ENCODE measurements at regions of chr11 and their contacts with region 1.

Region 1: DNA sequence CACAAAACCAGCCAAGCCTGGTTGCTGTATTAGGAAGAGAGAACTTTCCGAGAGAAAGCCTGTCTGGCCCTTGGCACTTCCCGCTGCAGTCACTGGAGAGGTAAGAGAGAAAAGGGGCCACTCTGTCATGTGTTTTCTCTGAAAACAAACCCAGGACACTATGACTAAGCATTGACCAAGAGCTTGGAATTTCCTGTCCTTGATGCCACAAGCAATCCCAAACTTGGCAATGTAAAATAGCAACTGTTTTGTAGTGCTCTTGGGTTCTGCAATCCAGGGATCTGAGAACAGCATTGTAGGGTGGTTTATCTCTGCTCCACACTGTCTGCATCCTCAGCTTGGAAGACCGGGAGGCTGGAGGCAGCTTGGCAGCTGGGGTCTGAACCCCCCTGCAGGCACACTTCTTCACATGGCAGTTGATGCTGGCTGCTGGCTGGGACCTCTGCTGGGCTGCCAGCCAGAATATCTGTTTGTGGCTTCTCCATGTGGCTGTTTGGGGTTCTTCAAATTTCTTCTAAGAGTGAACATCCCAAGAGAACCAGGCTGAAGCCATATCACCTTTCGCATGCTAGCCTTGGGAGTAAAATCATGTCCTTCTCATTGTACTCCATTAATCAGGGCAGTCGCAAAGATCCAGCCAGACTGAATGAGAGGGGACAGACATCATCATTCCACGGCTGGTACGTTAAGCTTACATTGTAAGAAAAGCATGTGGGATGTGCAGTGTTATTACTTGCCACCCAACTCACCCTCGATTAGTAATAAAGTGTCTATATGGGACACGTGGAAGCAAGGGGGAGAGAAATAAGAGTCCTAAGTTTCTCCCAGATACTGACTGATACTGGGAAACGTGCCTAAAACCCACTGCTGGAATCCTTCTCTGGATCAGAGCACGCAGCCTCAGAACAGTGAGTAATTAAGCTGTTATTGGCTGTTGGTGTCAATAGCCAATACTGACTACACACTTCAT is 537.4 kb upstream of the B3GAT1 start:
- DNase-seq: peak; percentile 27 to 88
- H3K4me3 ChIP-seq: peak overlapping the region in 1 of 2 donors; percentile 10
- H3K27ac ChIP-seq: peak overlapping the region; percentile 77 to 82
- H3K4me1 ChIP-seq: peaks cover 14 to 35% of the 10 kb centered on the region in 2 donors
- H3K27me3 ChIP-seq: no peaks in the 10 kb centered on the region
- CTCF ChIP-seq: no peak

Region 2: GRCh38 chr11:134488913-134489312 is 460.5 kb before region 1 on chr11:
- intact Hi-C with region 1: no loop called
- DNase-seq: peak in 1 of 2 donors; percentile 38
- H3K4me3 ChIP-seq: no peak overlapping the region
- H3K27ac ChIP-seq: no peak overlapping the region
- H3K4me1 ChIP-seq: no peaks in the 10 kb centered on the region
- H3K27me3 ChIP-seq: no peaks in the 10 kb centered on the region
- CTCF ChIP-seq: no peak

Region 3: DNA sequence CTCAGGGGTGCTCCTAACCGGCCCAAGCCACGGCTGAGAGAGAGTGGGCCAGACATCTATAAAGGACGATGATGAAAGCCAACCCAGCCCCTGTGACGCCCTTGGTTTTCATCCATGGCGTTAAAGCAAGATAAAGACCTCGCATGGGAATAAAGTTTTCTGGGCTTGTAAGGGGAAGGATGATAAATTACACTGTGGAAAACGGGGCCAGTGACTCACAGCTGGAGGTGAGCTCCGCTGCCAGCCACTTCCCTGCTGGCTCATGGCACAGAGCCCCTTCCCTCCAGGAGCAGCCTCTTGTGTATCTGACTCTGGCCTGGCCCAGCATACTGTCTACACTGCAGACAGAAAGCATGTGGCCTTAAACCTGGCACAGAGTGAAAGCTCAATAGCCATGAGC is 34.2 kb before region 1 on chr11:
- intact Hi-C with region 1: loop called (anchors 1 kb)
- DNase-seq: peak; percentile 59 to 90
- H3K4me3 ChIP-seq: no peak overlapping the region
- H3K27ac ChIP-seq: peak overlapping the region; percentile 73 to 83
- H3K4me1 ChIP-seq: peaks cover 0 to 23% of the 10 kb centered on the region in 2 donors
- H3K27me3 ChIP-seq: no peaks in the 10 kb centered on the region
- CTCF ChIP-seq: no peak